Colonic mucosa (tissue), 4 donors: ENCODE measurements at regions of chr6 and their contacts with region 1.

Region 1: GRCh38 chr6:105087571-105088211 is 92.1 kb downstream of the POPDC3 start:
- DNase-seq: peak; percentile 35
- H3K4me3 ChIP-seq: no peak overlapping the region
- H3K27ac ChIP-seq: no peak overlapping the region
- H3K4me1 ChIP-seq: no peaks in the 10 kb centered on the region
- H3K27me3 ChIP-seq: no peaks in the 10 kb centered on the region
- CTCF ChIP-seq: peak; percentile 85

Region 2: DNA sequence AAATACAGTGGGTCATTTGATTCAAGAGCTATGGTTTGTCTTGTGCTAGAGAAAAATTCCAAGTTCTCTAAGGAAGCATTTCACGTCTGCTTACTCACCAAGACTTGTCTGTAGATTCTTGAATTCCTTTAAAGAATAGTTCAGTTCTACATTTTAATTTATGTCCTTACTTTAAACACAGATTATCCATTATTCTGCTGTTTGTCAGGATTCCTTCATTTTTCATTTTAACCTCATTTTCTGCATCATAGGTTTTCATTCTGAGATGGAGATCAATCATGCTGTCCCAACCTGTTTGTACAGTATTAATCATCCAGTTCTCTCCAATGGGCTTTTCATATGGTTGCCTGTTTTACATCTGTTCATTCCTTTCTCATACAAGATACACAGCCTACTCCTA is 116.6 kb after region 1 on chr6:
- intact Hi-C with region 1: no loop called
- DNase-seq: no peak
- H3K4me3 ChIP-seq: no peak overlapping the region
- H3K27ac ChIP-seq: no peak overlapping the region
- H3K4me1 ChIP-seq: no peaks in the 10 kb centered on the region
- H3K27me3 ChIP-seq: no peaks in the 10 kb centered on the region
- CTCF ChIP-seq: no peak

Region 3: GRCh38 chr6:105402939-105403935 is 315.5 kb after region 1 on chr6 and contains the start of gene PREP:
- intact Hi-C with region 1: loop called (anchors 5 kb)
- DNase-seq: peak; percentile 87
- H3K4me3 ChIP-seq: peak within 1 kb of the TSS; percentile 90
- H3K27ac ChIP-seq: peak within 1 kb of the TSS; percentile 86
- H3K4me1 ChIP-seq: no peaks in the 10 kb centered on the region
- H3K27me3 ChIP-seq: no peaks in the 10 kb centered on the region
- CTCF ChIP-seq: peak; percentile 80
- total RNA-seq, gene PREP: 99.9 to 113 TPM

Region 4: DNA sequence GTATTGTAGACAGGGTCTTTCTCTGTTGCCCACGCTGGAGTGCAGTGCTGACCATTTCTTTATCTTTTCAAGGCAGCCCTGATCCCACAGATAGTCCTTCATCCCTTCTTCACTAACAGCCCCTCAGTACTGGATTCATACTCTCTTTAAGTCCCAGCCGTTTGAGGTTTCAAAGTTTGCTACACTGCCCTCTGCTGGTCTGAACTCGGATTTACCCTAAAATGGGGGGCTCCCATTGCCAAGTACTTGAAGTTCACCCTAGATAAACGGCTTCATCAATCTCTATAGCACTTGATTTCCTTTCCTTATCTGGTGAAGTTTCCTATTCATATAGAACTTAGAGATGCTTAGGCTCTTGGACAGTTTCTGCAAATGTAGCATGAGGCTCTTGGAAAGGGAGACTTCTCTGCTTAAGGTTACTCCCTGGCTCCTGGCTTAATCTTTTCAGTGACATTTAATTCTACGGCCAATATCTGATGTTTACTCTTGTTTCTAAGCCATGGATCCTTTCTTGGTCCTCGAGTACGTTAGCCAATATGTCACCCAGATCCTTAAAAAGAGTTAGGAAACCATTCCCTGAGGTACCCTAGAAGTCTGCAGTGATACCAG is 336.6 kb after region 1 on chr6:
- intact Hi-C with region 1: loop called (anchors 2 kb)
- DNase-seq: peak; percentile 56
- H3K4me3 ChIP-seq: no peak overlapping the region
- H3K27ac ChIP-seq: no peak overlapping the region
- H3K4me1 ChIP-seq: no peaks in the 10 kb centered on the region
- H3K27me3 ChIP-seq: no peaks in the 10 kb centered on the region
- CTCF ChIP-seq: peak; percentile 55